Activated CD8-positive, alpha-beta T cell treated with anti-CD3 and anti-CD28 coated beads for 36 hours (primary cell): ENCODE measurements at regions of chrX and their contacts with region 1.

Region 1: GRCh38 chrX:39814391-39814790 is 283.4 kb downstream of the BCOR start:
- DNase-seq: peak; percentile 57
- ATAC-seq: no peak
- H3K4me3 Mint-ChIP-seq: no peak overlapping the region
- H3K27ac Mint-ChIP-seq: no peak overlapping the region
- H3K4me1 Mint-ChIP-seq: peaks cover 32% of the 10 kb centered on the region
- H3K27me3 Mint-ChIP-seq: no peaks in the 10 kb centered on the region
- CTCF ChIP-seq: peak; percentile 55

Region 2: DNA sequence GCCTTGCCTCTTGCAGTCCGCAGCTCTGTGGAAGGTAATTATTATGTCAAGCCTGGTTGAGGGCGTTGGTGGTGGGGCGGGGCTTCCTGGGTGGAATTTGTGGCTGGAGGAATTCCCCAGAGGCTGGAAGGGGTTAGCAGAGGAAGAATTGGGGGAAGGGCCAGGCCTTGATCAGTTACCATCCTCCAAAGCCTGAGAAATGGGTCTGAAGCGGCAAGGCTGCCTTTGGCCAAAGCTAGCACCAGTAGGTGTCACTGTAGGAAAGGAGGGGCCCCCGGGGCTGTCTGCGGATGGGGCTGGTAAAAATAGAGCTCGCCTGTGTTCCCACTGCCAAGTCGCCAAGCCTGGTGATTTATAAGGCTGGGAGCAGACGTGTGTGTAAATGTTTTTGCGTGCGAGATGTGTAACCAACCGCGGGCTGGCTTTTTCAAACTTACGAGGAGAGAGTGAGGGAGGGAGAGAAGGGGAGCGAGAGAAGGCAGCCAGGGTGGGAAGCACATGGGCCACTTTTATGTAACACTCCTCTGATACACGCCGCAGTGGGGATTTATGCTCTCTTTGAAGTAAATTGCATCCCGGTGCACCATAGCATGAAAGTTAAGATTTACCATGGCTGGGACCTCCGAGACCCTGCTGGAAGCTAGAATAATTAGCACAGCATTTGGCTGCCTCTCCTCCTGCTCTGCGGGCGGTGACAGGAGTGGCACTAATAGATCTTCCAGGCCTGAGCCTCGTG is 83.6 kb before region 1 on chrX:
- CTCF ChIA-PET with region 1: interaction called, 4 read pairs
- POLR2A ChIA-PET with region 1: no interaction called
- intact Hi-C with region 1: loop called (anchors 10 kb)
- DNase-seq: peak; percentile 70
- ATAC-seq: peak; percentile 90
- H3K4me3 Mint-ChIP-seq: no peak overlapping the region
- H3K27ac Mint-ChIP-seq: peak overlapping the region; percentile 63
- H3K4me1 Mint-ChIP-seq: peaks cover 13% of the 10 kb centered on the region
- H3K27me3 Mint-ChIP-seq: peaks cover 3% of the 10 kb centered on the region
- CTCF ChIP-seq: peak; percentile 57

Region 3: DNA sequence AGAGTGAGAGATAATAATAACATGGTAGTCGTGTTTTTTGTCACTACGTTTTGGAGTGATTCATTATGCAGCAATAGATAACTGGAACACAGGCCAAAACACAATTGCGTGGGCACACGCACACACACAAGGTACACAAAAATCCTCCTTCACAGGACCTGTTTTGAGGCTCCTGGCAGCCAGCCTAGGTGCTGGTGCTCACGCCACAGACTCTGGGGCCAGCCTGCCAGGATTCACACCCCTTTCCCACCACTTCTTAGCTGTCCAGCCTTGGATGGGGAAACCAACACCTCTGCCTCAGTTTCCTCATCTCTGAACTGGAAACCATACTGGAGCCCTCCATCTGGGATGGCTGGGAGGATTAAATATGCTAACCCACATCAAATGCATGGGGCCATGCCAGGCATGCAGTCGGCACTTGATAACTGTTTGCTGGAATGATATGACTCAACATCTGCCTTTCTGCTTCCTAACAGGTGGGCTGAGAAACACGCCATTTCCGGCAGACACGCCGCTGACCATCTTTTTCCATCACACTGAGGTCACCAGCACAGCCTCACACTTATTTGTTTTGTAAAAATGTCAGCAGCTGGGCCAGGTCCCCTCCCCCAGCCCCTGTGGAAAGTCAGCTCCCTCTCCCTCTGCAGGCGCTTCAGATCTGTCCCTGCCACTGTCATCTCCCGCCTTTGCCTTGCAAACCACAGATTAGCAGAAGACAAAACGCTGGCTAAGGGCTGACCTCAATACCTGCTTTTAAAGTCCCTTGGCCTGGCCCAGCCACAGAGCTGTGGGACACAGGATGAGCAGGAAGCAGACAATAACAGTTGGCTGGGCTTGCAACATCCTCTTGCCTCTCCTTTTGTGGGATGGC is 45.8 kb after region 1 on chrX:
- CTCF ChIA-PET with region 1: interaction called, 4 read pairs
- POLR2A ChIA-PET with region 1: interaction called, 5 read pairs
- intact Hi-C with region 1: loop called (anchors 5 kb)
- DNase-seq: peak; percentile 94
- ATAC-seq: peak; percentile 66
- H3K4me3 Mint-ChIP-seq: peak overlapping the region; percentile 17
- H3K27ac Mint-ChIP-seq: peak overlapping the region; percentile 98
- H3K4me1 Mint-ChIP-seq: peaks cover 57% of the 10 kb centered on the region
- H3K27me3 Mint-ChIP-seq: no peaks in the 10 kb centered on the region
- CTCF ChIP-seq: no peak

Region 4: GRCh38 chrX:40153335-40154249 is 339.2 kb after region 1 on chrX:
- CTCF ChIA-PET with region 1: no interaction called
- POLR2A ChIA-PET with region 1: no interaction called
- intact Hi-C with region 1: loop called (anchors 5 kb)
- DNase-seq: peak; percentile 89
- ATAC-seq: peak; percentile 80
- H3K4me3 Mint-ChIP-seq: peak overlapping the region; percentile 76
- H3K27ac Mint-ChIP-seq: peak overlapping the region; percentile 81
- H3K4me1 Mint-ChIP-seq: peaks cover 17% of the 10 kb centered on the region
- H3K27me3 Mint-ChIP-seq: no peaks in the 10 kb centered on the region
- CTCF ChIP-seq: no peak

Region 5: GRCh38 chrX:40169193-40170101 is 355.1 kb after region 1 on chrX:
- CTCF ChIA-PET with region 1: no interaction called
- POLR2A ChIA-PET with region 1: no interaction called
- intact Hi-C with region 1: loop called (anchors 5 kb)
- DNase-seq: peak; percentile 92
- ATAC-seq: peak; percentile 65
- H3K4me3 Mint-ChIP-seq: peak overlapping the region; percentile 85
- H3K27ac Mint-ChIP-seq: peak overlapping the region; percentile 97
- H3K4me1 Mint-ChIP-seq: peaks cover 27% of the 10 kb centered on the region
- H3K27me3 Mint-ChIP-seq: no peaks in the 10 kb centered on the region
- CTCF ChIP-seq: peak; percentile 19